ENCODE measurements at regions of chr20 and their contacts with region 1.

Region 1: DNA sequence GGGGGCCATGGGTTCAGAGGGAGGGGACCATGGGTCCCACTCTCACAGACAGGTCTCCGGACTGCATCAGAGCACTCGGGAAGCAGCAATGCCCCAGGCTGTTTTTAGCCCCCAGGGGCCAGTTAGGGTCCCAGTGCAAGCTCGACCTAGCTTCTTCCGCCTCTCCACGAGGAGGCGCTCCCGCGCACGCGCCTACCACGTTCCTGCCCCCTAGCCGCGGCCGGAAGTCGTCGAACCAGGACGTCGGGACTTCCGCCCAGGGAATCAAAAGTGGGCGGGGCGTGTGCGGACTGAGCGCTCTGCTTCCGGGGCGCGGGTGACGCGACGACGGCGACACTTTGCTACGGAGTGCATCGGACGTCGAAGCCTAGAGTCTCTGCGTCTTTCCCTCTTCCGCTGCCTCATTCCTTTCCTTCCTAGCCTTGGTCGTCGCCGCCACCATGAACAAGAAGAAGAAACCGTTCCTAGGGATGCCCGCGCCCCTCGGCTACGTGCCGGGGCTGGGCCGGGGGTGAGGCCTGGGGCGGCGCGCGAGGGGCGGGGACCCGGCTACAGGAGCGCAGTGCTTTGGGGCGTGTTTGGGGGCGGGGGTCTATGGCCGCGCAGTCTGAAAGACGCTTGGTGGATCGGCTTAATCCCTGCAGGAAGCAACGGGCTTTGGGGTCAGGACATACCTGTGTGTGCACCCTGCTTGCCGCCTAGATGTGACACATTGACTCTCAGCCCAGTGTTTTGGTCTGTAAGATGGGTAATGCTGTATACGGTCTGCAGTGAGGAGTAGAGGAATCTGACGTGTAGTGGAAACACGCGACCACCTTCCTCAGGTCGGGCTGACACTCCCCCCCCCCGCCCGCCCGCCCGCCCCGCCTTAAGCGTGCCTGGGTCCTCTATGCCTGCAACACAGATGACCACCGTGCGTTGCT is at the start of gene PRPF6:
- DNase-seq: peak; percentile 88 to 98 (median 95)
- ATAC-seq: peak; percentile 60
- H3K4me3 ChIP-seq: peak within 1 kb of the TSS; percentile 67 to 76
- H3K4me3 Mint-ChIP-seq: peak within 1 kb of the TSS; percentile 91
- H3K27ac ChIP-seq: peak within 1 kb of the TSS; percentile 85 to 91
- H3K27ac Mint-ChIP-seq: peak within 1 kb of the TSS; percentile 95
- H3K4me1 ChIP-seq: peaks cover 52% of the 10 kb centered on the region
- H3K4me1 Mint-ChIP-seq: peaks cover 66% of the 10 kb centered on the region
- H3K27me3 ChIP-seq: no peaks in the 10 kb centered on the region
- H3K27me3 Mint-ChIP-seq: no peaks in the 10 kb centered on the region
- CTCF ChIP-seq: peak; percentile 78
- total RNA-seq, gene PRPF6: 51.6 to 51.9 TPM

Region 2: GRCh38 chr20:63664861-63665716 is 316.0 kb before region 1 on chr20:
- CTCF ChIA-PET with region 1: no interaction called
- POLR2A ChIA-PET with region 1: no interaction called
- intact Hi-C with region 1: no loop called
- DNase-seq: no peak
- ATAC-seq: no peak
- H3K4me3 ChIP-seq: no peak overlapping the region
- H3K4me3 Mint-ChIP-seq: no peak overlapping the region
- H3K27ac ChIP-seq: no peak overlapping the region
- H3K27ac Mint-ChIP-seq: no peak overlapping the region
- H3K4me1 ChIP-seq: no peaks in the 10 kb centered on the region
- H3K4me1 Mint-ChIP-seq: peaks cover 2% of the 10 kb centered on the region
- H3K27me3 ChIP-seq: no peaks in the 10 kb centered on the region
- H3K27me3 Mint-ChIP-seq: no peaks in the 10 kb centered on the region
- CTCF ChIP-seq: no peak

Region 3: GRCh38 chr20:63864847-63865640 is 116.0 kb before region 1 on chr20 and contains the start of gene TPD52L2:
- CTCF ChIA-PET with region 1: interaction called, 4 read pairs
- POLR2A ChIA-PET with region 1: interaction called, 7 read pairs
- intact Hi-C with region 1: loop called in 1 of 2 experiments (anchors 1 kb)
- DNase-seq: peak; percentile 95 to 99 (median 97)
- ATAC-seq: peak; percentile 89
- H3K4me3 ChIP-seq: peak within 1 kb of the TSS; percentile 62 to 95
- H3K4me3 Mint-ChIP-seq: peak within 1 kb of the TSS; percentile 98
- H3K27ac ChIP-seq: peak within 1 kb of the TSS; percentile 59 to 86
- H3K27ac Mint-ChIP-seq: peak within 1 kb of the TSS; percentile 97
- H3K4me1 ChIP-seq: peaks cover 23% of the 10 kb centered on the region
- H3K4me1 Mint-ChIP-seq: peaks cover 34% of the 10 kb centered on the region
- H3K27me3 ChIP-seq: no peaks in the 10 kb centered on the region
- H3K27me3 Mint-ChIP-seq: no peaks in the 10 kb centered on the region
- CTCF ChIP-seq: no peak
- total RNA-seq, gene TPD52L2: 18.7 to 19.4 TPM

Region 4: DNA sequence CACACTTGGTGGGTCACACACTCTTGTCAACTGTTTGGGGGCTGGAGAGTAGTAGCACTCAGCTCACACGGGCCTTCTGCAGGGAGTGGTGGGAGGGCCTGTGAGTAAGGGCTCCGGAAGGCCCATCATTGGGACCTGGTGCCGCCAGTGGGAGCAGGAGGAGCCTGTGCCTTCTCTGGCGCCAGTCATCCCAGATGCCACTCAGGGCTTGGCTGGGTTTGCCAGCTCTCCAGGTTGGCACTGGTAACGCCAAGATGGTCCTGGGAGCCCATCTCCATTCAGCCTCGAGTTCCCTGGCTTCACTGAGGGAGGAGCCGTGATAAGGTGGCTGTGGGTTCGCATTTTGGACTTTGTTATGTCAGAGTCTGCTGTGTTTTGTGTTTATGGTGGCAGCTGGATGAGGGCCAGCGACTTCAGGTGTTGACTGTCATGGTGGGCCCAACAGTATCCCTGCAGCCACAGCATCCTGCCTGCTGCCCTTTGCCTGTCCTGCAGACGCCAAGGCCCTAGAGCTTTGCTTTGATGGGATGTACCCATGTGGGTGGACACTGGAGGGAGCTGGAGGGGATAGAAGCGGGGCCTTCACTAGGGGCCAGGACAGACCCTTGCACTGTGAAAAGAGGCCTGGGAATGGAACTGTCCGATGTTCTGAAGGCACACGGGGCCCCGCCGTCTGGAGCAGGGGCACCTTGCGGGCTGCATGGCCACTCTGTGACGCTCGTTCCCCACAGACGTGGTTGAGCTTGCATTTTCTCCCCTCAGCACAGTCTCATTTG is 99.4 kb before region 1 on chr20:
- CTCF ChIA-PET with region 1: no interaction called
- POLR2A ChIA-PET with region 1: no interaction called
- intact Hi-C with region 1: no loop called
- DNase-seq: no peak
- ATAC-seq: no peak
- H3K4me3 ChIP-seq: no peak overlapping the region
- H3K4me3 Mint-ChIP-seq: no peak overlapping the region
- H3K27ac ChIP-seq: no peak overlapping the region
- H3K27ac Mint-ChIP-seq: no peak overlapping the region
- H3K4me1 ChIP-seq: no peaks in the 10 kb centered on the region
- H3K4me1 Mint-ChIP-seq: no peaks in the 10 kb centered on the region
- H3K27me3 ChIP-seq: no peaks in the 10 kb centered on the region
- H3K27me3 Mint-ChIP-seq: no peaks in the 10 kb centered on the region
- CTCF ChIP-seq: no peak

Region 5: GRCh38 chr20:63917811-63918210 is 63.3 kb before region 1 on chr20:
- CTCF ChIA-PET with region 1: no interaction called
- POLR2A ChIA-PET with region 1: no interaction called
- intact Hi-C with region 1: no loop called
- DNase-seq: no peak
- ATAC-seq: no peak
- H3K4me3 ChIP-seq: no peak overlapping the region
- H3K4me3 Mint-ChIP-seq: no peak overlapping the region
- H3K27ac ChIP-seq: no peak overlapping the region
- H3K27ac Mint-ChIP-seq: peak overlapping the region; percentile 20
- H3K4me1 ChIP-seq: no peaks in the 10 kb centered on the region
- H3K4me1 Mint-ChIP-seq: peaks cover 16% of the 10 kb centered on the region
- H3K27me3 ChIP-seq: no peaks in the 10 kb centered on the region
- H3K27me3 Mint-ChIP-seq: no peaks in the 10 kb centered on the region
- CTCF ChIP-seq: no peak

Region 6: DNA sequence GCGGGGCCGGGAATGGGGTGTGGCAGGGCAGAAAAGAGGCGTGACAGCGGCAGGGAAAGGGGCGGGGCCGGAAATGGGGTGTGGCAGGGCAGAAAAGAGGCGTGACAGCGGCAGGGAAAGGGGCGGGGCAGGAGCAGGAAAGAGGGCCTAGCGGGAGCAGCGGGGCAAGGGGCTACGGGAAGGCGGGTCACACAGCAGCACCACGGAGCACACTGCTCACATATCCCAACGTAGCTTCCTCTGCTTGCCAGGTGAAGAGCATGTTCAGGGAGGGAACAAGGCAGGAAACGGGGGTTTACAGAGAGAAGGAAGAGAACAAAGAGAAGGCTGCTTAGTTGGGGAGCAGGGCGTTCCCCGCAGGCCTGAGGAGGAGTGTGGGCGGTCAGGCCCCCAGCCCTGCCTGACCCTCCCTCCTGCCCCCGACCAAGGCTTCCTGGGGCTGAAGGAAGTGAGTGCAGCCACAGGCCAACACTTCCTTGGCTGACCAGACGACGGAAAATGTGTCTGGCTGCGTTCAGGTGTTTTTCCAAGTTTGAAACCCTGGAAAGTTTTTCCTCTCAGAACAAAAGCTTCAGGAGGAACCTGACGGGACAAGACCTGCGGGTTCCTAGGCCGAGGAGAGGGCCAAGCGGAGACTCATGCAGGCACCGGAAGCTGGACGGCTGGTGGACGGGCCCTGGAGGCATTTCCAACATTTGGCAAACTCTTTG is 38.7 kb before region 1 on chr20:
- CTCF ChIA-PET with region 1: no interaction called
- POLR2A ChIA-PET with region 1: no interaction called
- intact Hi-C with region 1: loop called in 1 of 2 experiments (anchors 5 kb)
- DNase-seq: peak in 3 of 9 experiments; percentile 45 to 59 (median 56)
- ATAC-seq: no peak
- H3K4me3 ChIP-seq: no peak overlapping the region
- H3K4me3 Mint-ChIP-seq: peak overlapping the region; percentile 57
- H3K27ac ChIP-seq: peak overlapping the region; percentile 27 to 58
- H3K27ac Mint-ChIP-seq: peak overlapping the region; percentile 45
- H3K4me1 ChIP-seq: peaks cover 23% of the 10 kb centered on the region
- H3K4me1 Mint-ChIP-seq: peaks cover 23% of the 10 kb centered on the region
- H3K27me3 ChIP-seq: no peaks in the 10 kb centered on the region
- H3K27me3 Mint-ChIP-seq: no peaks in the 10 kb centered on the region
- CTCF ChIP-seq: no peak

Region 7: GRCh38 chr20:64010711-64011237 is 29.7 kb after region 1 on chr20:
- CTCF ChIA-PET with region 1: interaction called, 3 read pairs
- POLR2A ChIA-PET with region 1: interaction called, 3 read pairs
- intact Hi-C with region 1: loop called in 1 of 2 experiments (anchors 2 kb)
- DNase-seq: peak in 1 of 9 experiments; percentile 18
- ATAC-seq: no peak
- H3K4me3 ChIP-seq: peak overlapping the region in 1 of 2 experiments; percentile 53
- H3K4me3 Mint-ChIP-seq: no peak overlapping the region
- H3K27ac ChIP-seq: peak overlapping the region in 1 of 2 experiments; percentile 60
- H3K27ac Mint-ChIP-seq: peak overlapping the region; percentile 66
- H3K4me1 ChIP-seq: peaks cover 45% of the 10 kb centered on the region
- H3K4me1 Mint-ChIP-seq: peaks cover 29% of the 10 kb centered on the region
- H3K27me3 ChIP-seq: no peaks in the 10 kb centered on the region
- H3K27me3 Mint-ChIP-seq: no peaks in the 10 kb centered on the region
- CTCF ChIP-seq: no peak

Region 8: GRCh38 chr20:64062596-64063388 is 81.7 kb after region 1 on chr20 and contains the start of gene TCEA2:
- CTCF ChIA-PET with region 1: interaction called, 7 read pairs
- POLR2A ChIA-PET with region 1: interaction called, 9 read pairs
- intact Hi-C with region 1: loop called (anchors 1 kb)
- DNase-seq: peak; percentile 84 to 97 (median 93)
- ATAC-seq: peak; percentile 94
- H3K4me3 ChIP-seq: peak within 1 kb of the TSS; percentile 47 to 68
- H3K4me3 Mint-ChIP-seq: peak within 1 kb of the TSS; percentile 82
- H3K27ac ChIP-seq: peak within 1 kb of the TSS; percentile 42 to 67
- H3K27ac Mint-ChIP-seq: peak within 1 kb of the TSS; percentile 63
- H3K4me1 ChIP-seq: peaks cover 48% of the 10 kb centered on the region
- H3K4me1 Mint-ChIP-seq: peaks cover 36% of the 10 kb centered on the region
- H3K27me3 ChIP-seq: no peaks in the 10 kb centered on the region
- H3K27me3 Mint-ChIP-seq: no peaks in the 10 kb centered on the region
- CTCF ChIP-seq: no peak
- total RNA-seq, gene TCEA2: 18.2 to 18.4 TPM

Region 9: GRCh38 chr20:64099880-64100565 is 119.0 kb after region 1 on chr20:
- CTCF ChIA-PET with region 1: no interaction called
- POLR2A ChIA-PET with region 1: no interaction called
- intact Hi-C with region 1: no loop called
- DNase-seq: peak in 4 of 9 experiments; percentile 46 to 80 (median 64)
- ATAC-seq: peak; percentile 82
- H3K4me3 ChIP-seq: no peak overlapping the region
- H3K4me3 Mint-ChIP-seq: no peak overlapping the region
- H3K27ac ChIP-seq: no peak overlapping the region
- H3K27ac Mint-ChIP-seq: no peak overlapping the region
- H3K4me1 ChIP-seq: peaks cover 16% of the 10 kb centered on the region
- H3K4me1 Mint-ChIP-seq: peaks cover 21% of the 10 kb centered on the region
- H3K27me3 ChIP-seq: peaks cover 6 to 8% of the 10 kb centered on the region in 2 experiments
- H3K27me3 Mint-ChIP-seq: peaks cover 14% of the 10 kb centered on the region
- CTCF ChIP-seq: no peak

Region 10: GRCh38 chr20:64119681-64120341 is 138.7 kb after region 1 on chr20:
- CTCF ChIA-PET with region 1: interaction called, 15 read pairs
- POLR2A ChIA-PET with region 1: no interaction called
- intact Hi-C with region 1: loop called (anchors 1 to 2 kb)
- DNase-seq: peak in 3 of 9 experiments; percentile 2 to 50 (median 27)
- ATAC-seq: peak; percentile 4
- H3K4me3 ChIP-seq: peak overlapping the region; percentile 36 to 38
- H3K4me3 Mint-ChIP-seq: peak overlapping the region; percentile 72
- H3K27ac ChIP-seq: peak overlapping the region in 1 of 2 experiments; percentile 39
- H3K27ac Mint-ChIP-seq: peak overlapping the region; percentile 62
- H3K4me1 ChIP-seq: peaks cover 9% of the 10 kb centered on the region
- H3K4me1 Mint-ChIP-seq: peaks cover 8% of the 10 kb centered on the region
- H3K27me3 ChIP-seq: peaks cover 0 to 3% of the 10 kb centered on the region in 2 experiments
- H3K27me3 Mint-ChIP-seq: peaks cover 4% of the 10 kb centered on the region
- CTCF ChIP-seq: no peak

Measured in CD8-positive, alpha-beta T cell (primary cell).